ENCODE measurements at regions of chr3 and their contacts with region 1.

Region 1: DNA sequence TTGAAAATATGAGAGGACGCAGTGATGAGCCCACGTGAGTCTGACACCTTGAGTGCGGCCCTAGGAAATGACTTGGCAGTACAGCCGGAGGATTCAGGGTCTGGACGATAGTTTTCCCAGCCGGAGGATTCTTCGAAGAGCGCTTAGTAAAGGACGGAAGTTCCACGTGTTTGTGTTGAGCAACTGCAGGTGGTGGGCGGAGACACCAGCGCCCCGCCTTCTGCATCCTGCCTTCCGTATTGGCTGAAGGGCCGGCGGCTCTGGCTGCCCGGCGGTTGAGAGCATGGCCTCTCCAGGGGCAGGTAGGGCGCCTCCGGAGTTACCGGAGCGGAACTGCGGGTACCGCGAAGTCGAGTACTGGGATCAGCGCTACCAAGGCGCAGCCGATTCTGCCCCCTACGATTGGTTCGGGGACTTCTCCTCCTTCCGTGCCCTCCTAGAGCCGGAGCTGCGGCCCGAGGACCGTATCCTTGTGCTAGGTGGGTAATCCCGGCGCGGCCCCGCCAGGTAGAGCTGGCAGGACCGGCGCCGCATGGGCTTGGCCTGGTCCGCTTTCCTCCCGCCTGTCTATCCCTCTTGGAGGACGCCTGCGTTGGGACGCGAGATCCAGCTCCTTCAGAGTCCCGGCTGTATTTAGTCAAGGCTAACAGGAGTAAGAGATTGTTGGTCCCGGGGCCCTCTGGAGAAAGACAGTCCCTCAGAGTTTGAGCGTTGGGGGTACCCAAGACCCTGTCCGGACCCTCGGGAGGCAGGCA is at the start of gene EEF1AKMT4:
- DNase-seq: peak; percentile 87 to 97 (median 95)
- H3K4me3 ChIP-seq: peak within 1 kb of the TSS; percentile 54 to 100 (median 85)
- H3K27ac ChIP-seq: peak within 1 kb of the TSS; percentile 48 to 94 (median 87)
- H3K27me3 ChIP-seq: no peaks in the 10 kb centered on the region
- CTCF ChIP-seq: peak in 51 of 56 donors; percentile 25 to 71 (median 49)
- total RNA-seq, gene EEF1AKMT4: 0.25 to 1.6 (median 0.52) TPM in 80 of 120 experiments, not detected in the others

Region 2: GRCh38 chr3:183641882-183642281 is 607.7 kb before region 1 on chr3:
- intact Hi-C with region 1: loop called in 1 of 2 experiments (anchors 10 kb)
- DNase-seq: no peak
- H3K4me3 ChIP-seq: peak overlapping the region in 6 of 59 donors; percentile 5 to 17 (median 8)
- H3K27ac ChIP-seq: peak overlapping the region in 37 of 59 donors; percentile 1 to 77 (median 43)
- H3K27me3 ChIP-seq: no peaks in the 10 kb centered on the region
- CTCF ChIP-seq: no peak

Region 3: DNA sequence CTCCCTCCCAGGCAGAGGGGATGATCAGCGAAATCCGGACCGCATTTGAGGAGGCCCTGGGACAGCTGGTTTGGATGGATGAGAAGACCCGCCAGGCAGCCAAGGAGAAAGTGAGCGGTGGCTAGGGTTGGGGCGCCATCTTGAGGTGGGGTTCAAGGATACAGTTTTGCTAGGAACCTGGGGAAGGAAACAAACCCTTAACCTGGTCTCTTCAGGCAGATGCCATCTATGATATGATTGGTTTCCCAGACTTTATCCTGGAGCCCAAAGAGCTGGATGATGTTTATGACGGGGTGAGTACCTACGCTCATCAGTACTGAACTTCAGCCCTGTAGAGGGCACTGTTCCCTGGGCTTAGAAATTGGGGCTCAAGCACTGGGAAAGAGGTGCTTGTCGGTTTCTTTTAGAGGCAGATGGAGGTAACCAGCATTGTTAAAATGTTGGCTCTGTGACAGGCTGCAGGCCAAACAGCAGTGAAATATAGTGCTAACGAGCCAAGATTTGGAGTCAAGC is 39.9 kb after region 1 on chr3:
- intact Hi-C with region 1: loop called in 1 of 2 experiments (anchors 5 kb)
- DNase-seq: peak in 8 of 10 donors; percentile 23 to 66 (median 52)
- H3K4me3 ChIP-seq: no peak overlapping the region
- H3K27ac ChIP-seq: no peak overlapping the region
- H3K27me3 ChIP-seq: no peaks in the 10 kb centered on the region
- CTCF ChIP-seq: peak in 54 of 56 donors; percentile 35 to 77 (median 63)

Measured in dorsolateral prefrontal cortex (tissue), 120 donors.